Dorsolateral prefrontal cortex (tissue), 120 donors: ENCODE measurements at regions of chr18 and their contacts with region 1.

Region 1: DNA sequence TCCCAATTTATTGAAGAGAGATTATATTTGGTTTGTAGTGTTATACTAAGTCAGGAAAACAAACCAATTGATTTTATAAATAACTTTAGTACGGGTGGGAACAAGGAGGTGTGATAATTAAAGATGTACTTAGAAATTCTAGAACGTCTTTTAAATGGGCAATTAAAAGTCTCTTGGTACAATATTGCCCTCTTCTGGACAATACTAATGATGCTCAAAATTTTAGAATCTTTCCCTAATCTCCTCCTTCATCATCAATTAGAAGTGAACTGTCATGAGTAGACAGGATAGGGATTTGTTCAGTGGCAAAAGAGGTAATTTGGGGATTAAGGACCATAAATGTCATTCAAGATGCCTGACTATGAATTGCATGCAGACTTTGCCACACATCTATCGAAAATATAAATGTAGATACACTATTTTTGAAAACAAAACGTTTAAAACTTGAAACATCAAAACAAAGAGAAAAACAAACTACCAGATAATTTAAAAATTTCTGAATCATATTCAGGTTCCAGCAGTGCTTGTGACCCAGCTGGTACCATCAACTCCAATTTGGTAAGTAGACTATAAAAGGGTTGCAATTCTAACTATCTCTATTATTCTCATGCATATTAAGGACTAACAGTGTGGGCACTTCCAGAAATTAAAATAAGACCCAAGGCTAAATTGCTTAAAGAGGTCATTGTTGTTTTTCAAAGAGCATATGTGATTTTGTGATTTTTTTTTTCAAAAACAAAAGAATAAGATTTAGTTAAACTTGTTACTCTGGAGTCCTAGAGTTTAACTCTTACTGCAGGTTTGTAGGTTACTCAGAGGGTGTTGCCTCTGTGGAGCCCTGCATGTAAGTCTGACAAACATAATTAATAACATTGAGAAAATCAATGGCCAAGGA is 123.5 kb downstream of the LAMA3 start:
- DNase-seq: no peak
- H3K4me3 ChIP-seq: no peak overlapping the region
- H3K27ac ChIP-seq: no peak overlapping the region
- H3K27me3 ChIP-seq: no peaks in the 10 kb centered on the region
- CTCF ChIP-seq: peak; percentile 33 to 85 (median 64)

Region 2: DNA sequence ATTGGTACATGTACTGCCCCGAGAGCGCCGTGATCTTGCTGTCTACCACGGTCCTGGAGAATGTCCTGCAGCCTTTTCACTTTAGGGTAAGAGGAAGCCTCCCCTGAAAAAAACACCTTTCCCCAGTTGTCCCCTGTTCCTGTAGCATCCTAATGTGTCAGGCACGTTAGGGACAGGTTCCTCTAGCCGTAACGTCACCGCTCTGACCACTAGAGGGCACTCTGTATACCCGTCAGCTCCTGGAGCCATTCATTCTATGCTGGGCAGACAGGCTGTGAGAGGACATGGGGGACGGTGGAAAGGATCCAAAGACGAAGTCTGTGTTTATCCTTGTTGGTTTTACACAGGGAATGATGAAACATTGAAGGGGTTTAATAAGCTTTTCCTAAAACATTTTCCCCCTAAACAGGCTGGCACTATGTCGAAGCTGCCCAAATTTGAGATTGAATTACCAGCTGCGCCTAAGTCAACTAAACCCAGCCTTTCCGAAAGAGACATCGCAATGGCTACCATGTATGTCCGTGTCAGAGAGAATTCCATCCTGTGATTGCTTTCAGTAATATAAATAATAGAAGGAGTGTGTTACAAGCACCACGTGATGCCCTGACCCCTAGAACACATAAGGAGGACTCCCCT is 296.8 kb before region 1 on chr18:
- intact Hi-C with region 1: loop called in 1 of 2 experiments (anchors 10 kb)
- DNase-seq: peak; percentile 60 to 87 (median 81)
- H3K4me3 ChIP-seq: peak overlapping the region in 1 of 59 donors; percentile 1
- H3K27ac ChIP-seq: peak overlapping the region in 42 of 59 donors; percentile 6 to 78 (median 48)
- H3K27me3 ChIP-seq: no peaks in the 10 kb centered on the region
- CTCF ChIP-seq: peak; percentile 60 to 93 (median 85)

Region 3: GRCh38 chr18:23623040-23623439 is 189.8 kb before region 1 on chr18:
- intact Hi-C with region 1: loop called (anchors 2 to 5 kb)
- DNase-seq: no peak
- H3K4me3 ChIP-seq: no peak overlapping the region
- H3K27ac ChIP-seq: no peak overlapping the region
- H3K27me3 ChIP-seq: no peaks in the 10 kb centered on the region
- CTCF ChIP-seq: no peak

Region 4: DNA sequence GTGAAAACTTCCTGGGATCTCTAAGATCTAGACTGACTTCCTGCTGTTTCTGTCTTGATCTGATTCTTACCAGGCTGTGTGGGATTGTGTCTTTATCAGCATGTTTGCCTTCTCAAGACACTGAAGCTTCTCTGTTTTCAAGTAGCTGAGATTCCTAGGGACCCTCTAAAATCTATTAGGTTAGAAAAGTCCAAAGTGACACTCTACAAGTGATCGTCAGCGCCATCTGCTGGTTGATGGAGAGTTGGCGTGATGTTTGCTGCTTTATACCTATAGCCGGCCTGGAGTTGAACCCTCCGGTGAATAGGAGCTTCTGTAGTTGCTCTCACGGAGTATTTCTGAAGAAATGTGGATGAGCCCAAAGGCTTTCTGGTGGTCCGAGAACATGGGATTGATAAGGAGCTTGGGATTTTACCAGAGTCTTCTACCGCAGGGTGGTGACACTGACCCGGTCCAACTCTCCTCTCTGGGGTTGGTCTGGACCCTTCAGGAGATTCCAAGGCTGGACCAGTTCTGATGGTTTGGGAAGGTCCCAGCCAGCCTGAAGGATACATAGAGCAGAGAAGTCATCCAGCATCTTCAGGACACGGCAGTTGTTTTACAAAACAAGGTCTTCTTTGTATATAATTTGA is 105.7 kb after region 1 on chr18:
- intact Hi-C with region 1: loop called in 1 of 2 experiments (anchors 5 kb)
- DNase-seq: peak; percentile 13 to 85 (median 64)
- H3K4me3 ChIP-seq: no peak overlapping the region
- H3K27ac ChIP-seq: no peak overlapping the region
- H3K27me3 ChIP-seq: peaks cover 0 to 3% (median 0%) of the 10 kb centered on the region in 45 donors
- CTCF ChIP-seq: peak; percentile 41 to 87 (median 76)

Region 5: DNA sequence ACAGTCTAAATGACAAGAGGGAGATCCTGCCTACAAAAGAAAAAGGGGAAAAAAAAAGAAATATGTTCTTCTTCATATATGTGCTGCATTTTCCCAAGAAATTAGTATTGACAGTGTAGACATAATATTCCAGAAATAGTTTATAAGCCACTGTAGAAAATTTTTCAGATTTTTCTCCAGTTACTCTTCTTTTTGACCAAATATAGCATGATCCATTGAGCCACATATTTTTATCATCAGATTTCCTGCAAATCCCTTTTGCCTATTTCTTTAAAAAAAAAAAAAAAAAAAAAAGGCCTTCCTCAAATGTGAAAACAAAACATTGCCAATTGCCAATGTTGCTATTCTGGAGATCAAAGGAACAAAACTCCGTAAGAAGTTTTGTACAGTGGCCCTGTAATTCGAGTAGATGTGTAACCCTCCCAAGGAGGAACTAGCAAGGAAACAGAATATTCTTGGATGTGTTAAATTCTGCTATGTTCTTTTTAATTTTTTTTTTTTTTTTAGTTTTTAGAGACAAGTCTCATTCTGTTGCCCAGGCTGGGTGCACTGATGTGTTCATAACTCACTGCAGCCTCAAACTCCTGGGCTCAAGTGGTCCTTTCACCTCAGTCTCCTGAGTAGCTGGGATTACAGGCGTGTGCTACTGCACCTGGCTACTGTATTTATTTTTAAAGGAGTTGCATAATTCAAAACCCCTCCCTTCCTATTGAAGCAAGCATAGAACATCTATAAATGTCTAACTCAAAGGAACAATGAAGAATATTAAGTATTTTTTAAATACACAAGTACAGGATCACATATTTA is 313.6 kb after region 1 on chr18:
- intact Hi-C with region 1: loop called in 1 of 2 experiments (anchors 10 kb)
- DNase-seq: no peak
- H3K4me3 ChIP-seq: no peak overlapping the region
- H3K27ac ChIP-seq: peak overlapping the region in 1 of 59 donors; percentile 3
- H3K27me3 ChIP-seq: no peaks in the 10 kb centered on the region
- CTCF ChIP-seq: no peak